Esophagus squamous epithelium (tissue), 5 donors: ENCODE measurements at regions of chr17 and their contacts with region 1.

Region 1: GRCh38 chr17:72120642-72121163 is at the start of gene SOX9:
- DNase-seq: no peak
- H3K4me3 ChIP-seq: peak within 1 kb of the TSS; percentile 60 to 70 (median 66)
- H3K27ac ChIP-seq: peak within 1 kb of the TSS; percentile 59 to 90 (median 85)
- H3K4me1 ChIP-seq: peaks cover 17 to 82% (median 19%) of the 10 kb centered on the region in 3 donors
- H3K27me3 ChIP-seq: peaks cover 9 to 96% (median 17%) of the 10 kb centered on the region in 4 donors
- CTCF ChIP-seq: no peak
- POLR2A ChIP-seq: peak in 3 of 4 donors; percentile 23 to 79 (median 67)
- total RNA-seq, gene SOX9: 7.4 to 11.5 (median 11.1) TPM

Region 2: GRCh38 chr17:71472809-71473789 is 647.6 kb before region 1 on chr17:
- intact Hi-C with region 1: loop called (anchors 10 kb)
- DNase-seq: no peak
- H3K4me3 ChIP-seq: no peak overlapping the region
- H3K27ac ChIP-seq: no peak overlapping the region
- H3K4me1 ChIP-seq: no peaks in the 10 kb centered on the region
- H3K27me3 ChIP-seq: no peaks in the 10 kb centered on the region
- CTCF ChIP-seq: peak in 5 of 6 experiments; percentile 39 to 69 (median 55)
- POLR2A ChIP-seq: no peak

Region 3: GRCh38 chr17:72030067-72030899 is 90.4 kb before region 1 on chr17:
- intact Hi-C with region 1: no loop called
- DNase-seq: no peak
- H3K4me3 ChIP-seq: peak overlapping the region; percentile 14 to 64 (median 42)
- H3K27ac ChIP-seq: no peak overlapping the region
- H3K4me1 ChIP-seq: peaks cover 0 to 16% (median 0%) of the 10 kb centered on the region in 3 donors
- H3K27me3 ChIP-seq: peaks cover 0 to 44% (median 0%) of the 10 kb centered on the region in 4 donors
- CTCF ChIP-seq: peak in 5 of 6 experiments; percentile 16 to 58 (median 32)
- POLR2A ChIP-seq: no peak

Region 4: GRCh38 chr17:72193391-72194106 is 72.8 kb after region 1 on chr17:
- intact Hi-C with region 1: no loop called
- DNase-seq: no peak
- H3K4me3 ChIP-seq: no peak overlapping the region
- H3K27ac ChIP-seq: no peak overlapping the region
- H3K4me1 ChIP-seq: no peaks in the 10 kb centered on the region
- H3K27me3 ChIP-seq: no peaks in the 10 kb centered on the region
- CTCF ChIP-seq: no peak
- POLR2A ChIP-seq: no peak

Region 5: DNA sequence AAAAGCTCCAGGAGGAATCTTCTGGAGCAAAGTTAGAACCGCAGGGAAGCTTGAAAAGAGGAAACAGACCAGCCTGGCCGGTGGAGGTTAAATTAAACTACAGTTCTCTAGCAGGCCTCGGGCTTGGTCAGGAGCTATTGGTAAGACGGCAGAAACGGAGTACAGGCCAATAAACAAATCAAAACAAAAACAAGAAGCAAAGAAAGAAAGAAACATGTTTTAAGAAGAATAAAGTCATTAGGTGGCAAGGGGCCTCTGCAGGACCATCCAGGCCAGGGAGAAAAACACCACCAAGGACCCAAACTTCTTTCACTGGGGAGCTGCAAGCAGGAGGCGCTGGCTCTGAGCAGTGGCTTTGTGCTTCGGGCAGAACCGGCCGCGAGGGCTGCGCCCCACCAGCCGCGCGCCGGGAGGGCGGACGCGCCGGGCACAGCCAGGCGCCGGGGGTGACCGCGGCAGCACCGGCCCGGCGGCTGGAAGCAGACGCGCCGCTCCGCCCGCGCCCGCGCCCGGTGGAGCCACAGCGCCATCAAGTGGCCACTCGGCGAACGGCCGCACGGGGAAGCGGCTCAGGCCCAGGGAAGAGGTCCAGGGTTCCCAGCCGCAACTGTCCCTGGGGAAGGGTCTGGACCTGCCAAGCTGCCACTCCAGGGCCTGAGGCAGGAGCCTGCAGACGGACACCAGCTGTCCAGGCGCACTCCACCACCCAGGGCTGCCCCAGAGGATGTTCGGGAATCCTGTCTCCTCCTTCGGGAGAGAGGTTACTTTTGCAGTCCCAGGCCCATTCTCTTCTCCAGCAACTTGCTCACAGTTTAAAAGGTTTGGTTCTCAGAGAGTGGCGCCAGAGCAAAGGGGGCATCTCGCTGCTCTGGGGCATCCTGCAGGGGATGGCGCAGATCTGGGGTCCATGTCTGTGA is 419.5 kb after region 1 on chr17:
- intact Hi-C with region 1: loop called (anchors 10 kb)
- DNase-seq: no peak
- H3K4me3 ChIP-seq: peak overlapping the region in 2 of 4 donors; percentile 29 to 45
- H3K27ac ChIP-seq: peak overlapping the region in 1 of 4 donors; percentile 29
- H3K4me1 ChIP-seq: peaks cover 3 to 14% (median 5%) of the 10 kb centered on the region in 3 donors
- H3K27me3 ChIP-seq: peaks cover 0 to 7% (median 0%) of the 10 kb centered on the region in 4 donors
- CTCF ChIP-seq: peak; percentile 27 to 98 (median 93)
- POLR2A ChIP-seq: no peak